ENCODE measurements at regions of chr5 and their contacts with region 1.

Region 1: DNA sequence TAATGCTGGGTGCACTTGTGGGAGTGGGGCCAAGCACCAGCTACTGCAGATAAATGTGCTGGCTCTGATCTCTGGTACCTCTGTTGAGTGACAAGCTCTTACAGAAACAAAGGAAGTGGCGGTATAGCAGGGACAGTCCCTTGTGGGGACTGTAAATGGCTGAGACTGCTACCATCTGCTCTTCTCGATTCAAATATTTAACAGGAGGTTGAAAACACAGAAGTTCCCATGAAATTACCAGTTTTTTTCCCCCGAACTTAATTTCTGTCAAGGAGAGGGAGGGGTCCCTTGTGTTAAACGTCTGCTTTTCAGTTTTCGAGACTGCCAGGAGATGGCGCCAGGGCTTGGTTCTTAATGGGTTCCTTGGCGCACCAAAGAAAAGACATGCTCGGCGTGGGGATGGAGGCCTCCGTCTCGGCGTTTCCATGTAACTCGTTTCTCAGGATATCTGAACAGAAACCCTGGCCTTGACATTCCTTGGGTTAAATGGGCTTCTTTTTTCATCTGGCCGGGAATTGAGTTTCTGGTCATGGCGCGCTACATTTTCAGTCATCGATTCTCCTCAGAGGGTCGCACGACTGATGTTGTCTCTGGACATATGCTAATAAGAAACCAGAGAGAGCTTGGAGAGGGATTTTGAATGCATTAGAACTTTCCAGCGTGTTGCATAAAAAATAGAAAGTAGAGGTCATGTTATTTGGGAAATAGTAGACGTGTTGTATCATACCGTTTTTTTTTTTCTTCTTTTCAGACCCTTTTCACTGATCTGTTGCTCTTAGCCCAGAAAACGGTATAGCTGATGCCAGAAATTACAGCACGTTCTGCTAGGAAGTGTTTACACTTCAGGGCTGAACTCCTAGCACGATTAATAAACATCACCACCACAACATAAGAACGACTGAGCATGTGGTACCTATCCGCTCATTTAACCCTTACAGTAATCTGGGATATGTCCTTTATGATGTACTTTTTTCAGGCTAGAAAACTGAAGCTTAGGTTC is 64.0 kb downstream of the CARTPT start:
- DNase-seq: peak; percentile 89
- ATAC-seq: peak; percentile 80
- H3K4me3 Mint-ChIP-seq: peak overlapping the region; percentile 31
- H3K27ac Mint-ChIP-seq: no peak overlapping the region
- H3K4me1 Mint-ChIP-seq: peaks cover 24% of the 10 kb centered on the region
- H3K27me3 Mint-ChIP-seq: peaks cover 2% of the 10 kb centered on the region; the same call in 1 of the 2 replicates
- CTCF ChIP-seq: peak; percentile 61

Region 2: GRCh38 chr5:72018146-72018803 is 235.2 kb after region 1 on chr5:
- CTCF ChIA-PET with region 1: interaction called, 12 read pairs
- POLR2A ChIA-PET with region 1: no interaction called
- DNase-seq: peak; percentile 84
- ATAC-seq: peak; percentile 81
- H3K4me3 Mint-ChIP-seq: no peak overlapping the region
- H3K27ac Mint-ChIP-seq: no peak overlapping the region
- H3K4me1 Mint-ChIP-seq: peaks cover 17% of the 10 kb centered on the region
- H3K27me3 Mint-ChIP-seq: no peaks in the 10 kb centered on the region
- CTCF ChIP-seq: peak; percentile 99

Region 3: DNA sequence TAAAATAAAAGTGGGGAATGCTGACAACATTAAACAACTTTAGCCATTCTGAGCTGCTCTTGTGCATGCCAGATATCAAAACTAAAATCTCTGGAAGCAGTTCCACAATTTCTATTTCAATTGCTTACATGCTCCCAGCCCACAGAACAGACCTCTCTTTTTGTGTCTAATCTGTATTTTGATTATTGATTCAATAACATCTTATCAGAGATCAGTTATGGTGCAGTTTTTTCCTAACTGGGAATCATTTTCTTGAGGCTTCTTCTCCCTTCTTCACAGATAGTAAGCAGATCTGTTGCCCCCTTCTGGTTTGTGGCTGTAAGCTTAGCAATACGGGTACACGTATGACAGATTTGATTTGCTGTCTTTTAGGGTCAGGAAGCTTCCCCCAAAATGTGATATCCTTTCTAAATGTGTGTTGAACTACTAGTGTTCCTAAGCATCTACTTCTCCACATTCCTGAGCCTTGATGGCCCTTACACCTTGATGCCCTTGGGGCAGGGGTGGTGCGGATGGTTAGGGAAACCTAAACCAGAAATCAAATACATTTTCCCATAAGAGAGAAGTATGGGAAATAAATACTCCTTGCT is 497.6 kb after region 1 on chr5:
- CTCF ChIA-PET with region 1: interaction called, 10 read pairs
- POLR2A ChIA-PET with region 1: no interaction called
- DNase-seq: no peak
- ATAC-seq: peak; percentile 79
- H3K4me3 Mint-ChIP-seq: no peak overlapping the region
- H3K27ac Mint-ChIP-seq: no peak overlapping the region
- H3K4me1 Mint-ChIP-seq: peaks cover 6% of the 10 kb centered on the region
- H3K27me3 Mint-ChIP-seq: no peaks in the 10 kb centered on the region
- CTCF ChIP-seq: 0 out of 2 replicates have a peak, but pooled peaks have one; percentile 25

Region 4: GRCh38 chr5:72307968-72308852 is 525.1 kb after region 1 on chr5:
- CTCF ChIA-PET with region 1: interaction called, 12 read pairs
- POLR2A ChIA-PET with region 1: no interaction called
- DNase-seq: peak; percentile 91
- ATAC-seq: peak; percentile 97
- H3K4me3 Mint-ChIP-seq: peak overlapping the region; percentile 75
- H3K27ac Mint-ChIP-seq: peak overlapping the region; percentile 97
- H3K4me1 Mint-ChIP-seq: peaks cover 20% of the 10 kb centered on the region
- H3K27me3 Mint-ChIP-seq: no peaks in the 10 kb centered on the region
- CTCF ChIP-seq: peak; percentile 29; the same call in 1 of the 2 replicates